PC-9 (cell line): ENCODE measurements at regions of chr5 and their contacts with region 1.

Region 1: DNA sequence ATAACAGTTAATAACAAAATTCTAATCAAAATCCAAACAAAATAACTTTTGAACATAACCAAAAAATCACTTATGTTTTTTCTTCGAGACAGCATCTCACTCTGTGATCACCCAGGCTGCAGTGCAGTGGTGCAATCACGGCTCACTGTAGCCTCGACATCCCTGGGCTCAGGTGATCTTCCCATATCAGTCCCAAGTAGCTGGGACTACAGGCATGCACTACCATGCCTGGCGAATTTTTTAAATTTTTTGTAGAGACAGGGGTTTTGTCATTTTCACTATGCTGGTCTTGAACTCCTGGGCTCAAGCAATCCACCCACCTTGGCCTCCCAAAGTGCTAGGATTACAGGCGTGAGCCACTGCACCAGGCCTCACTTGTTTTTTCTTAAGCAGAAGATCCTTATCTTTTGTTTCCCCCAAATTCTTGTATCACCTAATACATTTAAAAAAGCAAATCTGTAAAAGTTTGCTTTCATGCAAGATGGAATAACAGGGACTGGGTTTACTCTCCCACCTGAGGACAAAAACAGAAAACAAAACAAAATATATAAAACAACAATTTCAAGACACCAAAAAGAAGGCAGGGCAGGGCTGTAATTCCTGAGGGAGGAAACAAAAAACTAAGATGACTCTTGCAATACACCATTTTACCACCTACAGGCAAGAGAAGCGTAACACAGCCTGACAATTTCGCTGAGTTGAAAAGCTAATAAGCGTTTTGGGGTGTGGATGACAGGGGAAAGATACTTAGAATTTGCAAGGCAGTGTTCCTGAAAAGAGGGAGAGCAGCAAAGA is 71.4 kb downstream of the RAPGEF6 start:
- DNase-seq: no peak
- H3K4me3 ChIP-seq: no peak overlapping the region
- H3K27ac ChIP-seq: no peak overlapping the region
- H3K4me1 ChIP-seq: no peaks in the 10 kb centered on the region
- H3K27me3 ChIP-seq: no peaks in the 10 kb centered on the region
- CTCF ChIP-seq: no peak

Region 2: DNA sequence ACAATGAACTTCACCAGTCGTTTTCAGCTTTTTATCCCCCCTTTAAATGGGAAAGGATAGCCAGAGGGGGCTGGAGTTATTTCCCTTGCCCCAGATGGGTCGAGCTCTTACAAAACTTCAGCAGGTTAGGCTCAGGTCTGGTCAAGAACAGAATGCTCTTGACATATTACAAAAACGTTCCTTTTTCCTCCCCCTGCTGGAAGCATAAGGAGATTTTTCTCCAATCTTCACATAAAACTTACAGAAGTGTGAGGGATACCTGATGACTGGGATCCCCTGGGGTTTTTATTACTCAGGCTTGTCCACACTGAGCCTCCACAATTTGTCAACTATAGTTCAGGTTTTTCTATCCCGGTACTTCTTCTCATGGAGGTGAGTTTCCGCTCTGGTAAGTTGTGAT is 570.8 kb after region 1 on chr5:
- CTCF ChIA-PET with region 1: interaction called, 12 read pairs
- POLR2A ChIA-PET with region 1: no interaction called
- intact Hi-C with region 1: no loop called
- DNase-seq: peak in 1 of 2 experiments; percentile 41
- H3K4me3 ChIP-seq: no peak overlapping the region
- H3K27ac ChIP-seq: no peak overlapping the region
- H3K4me1 ChIP-seq: no peaks in the 10 kb centered on the region
- H3K27me3 ChIP-seq: no peaks in the 10 kb centered on the region
- CTCF ChIP-seq: peak; percentile 58